Testis (tissue), 5 donors: ENCODE measurements at regions of chr17 and their contacts with region 1.

Region 1: DNA sequence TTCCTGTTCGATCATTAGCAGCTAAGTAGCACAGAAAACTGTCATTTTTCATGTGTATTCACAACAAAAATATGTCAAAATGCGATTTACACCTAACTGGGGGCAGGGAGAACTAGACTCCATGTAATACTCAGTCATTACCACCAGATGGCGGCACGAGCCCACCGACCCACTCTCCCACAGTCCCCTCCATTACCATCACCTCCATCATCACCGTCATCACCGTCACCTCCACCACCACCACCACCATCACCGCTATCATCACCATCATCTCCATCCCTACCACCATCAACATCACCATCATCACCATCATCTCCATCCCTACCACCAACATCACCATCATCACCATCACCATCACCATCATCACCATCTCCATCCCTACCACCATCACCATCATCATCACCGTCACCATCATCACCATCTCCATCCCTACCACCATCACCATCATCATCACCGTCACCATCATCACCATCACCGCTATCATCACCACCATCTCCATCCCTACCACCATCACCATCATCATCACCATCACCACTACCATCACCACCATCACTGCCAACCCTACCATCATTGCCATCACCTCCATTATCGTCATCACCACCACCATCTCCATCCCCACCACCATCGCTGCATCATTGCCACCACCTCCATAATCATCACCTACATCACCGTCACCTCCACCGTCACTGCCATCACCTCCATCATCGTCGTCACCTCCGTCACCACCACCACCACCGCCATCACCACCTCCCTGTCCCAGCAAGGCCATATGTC is 14.4 kb downstream of the NDUFAF8 start:
- DNase-seq: peak; percentile 47
- H3K4me3 ChIP-seq: no peak overlapping the region
- H3K27ac ChIP-seq: no peak overlapping the region
- H3K4me1 ChIP-seq: peaks cover 12% of the 10 kb centered on the region
- H3K27me3 ChIP-seq: no peaks in the 10 kb centered on the region
- CTCF ChIP-seq: peak; percentile 82 to 88 (median 86)
- POLR2A ChIP-seq: no peak

Region 2: DNA sequence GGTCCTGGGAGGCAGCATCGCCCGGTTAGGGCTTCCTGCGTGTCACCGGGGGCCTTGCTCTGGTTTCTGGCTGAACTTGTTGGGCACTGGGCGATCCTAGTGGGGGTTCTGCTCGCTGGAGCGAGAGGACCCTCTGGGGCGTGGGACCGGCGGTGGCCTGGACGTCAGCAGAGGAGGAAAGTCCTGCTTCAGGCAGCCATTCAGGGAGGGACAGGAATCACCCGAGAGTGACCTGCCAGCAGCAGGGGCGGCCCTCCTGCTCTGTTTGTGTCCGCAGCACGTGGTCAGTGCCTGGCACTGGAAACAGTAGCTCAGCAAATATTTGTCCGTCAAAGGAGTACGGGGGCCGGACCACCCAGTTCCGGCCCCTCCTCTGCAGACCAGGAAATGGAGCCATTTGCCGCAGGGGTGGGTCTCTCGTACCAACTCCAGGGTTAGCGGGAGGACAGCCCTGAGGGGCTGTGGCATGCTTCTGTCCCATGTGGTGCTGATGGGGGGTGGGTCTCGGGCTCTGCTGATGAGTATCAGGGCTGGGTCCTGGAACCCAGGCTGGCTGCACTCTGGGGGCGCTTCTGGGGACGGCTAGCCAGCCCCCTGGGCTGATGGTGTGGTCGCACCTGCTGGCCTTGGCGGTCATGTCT is 170.3 kb before region 1 on chr17:
- intact Hi-C with region 1: no loop called
- DNase-seq: no peak
- H3K4me3 ChIP-seq: no peak overlapping the region
- H3K27ac ChIP-seq: no peak overlapping the region
- H3K4me1 ChIP-seq: no peaks in the 10 kb centered on the region
- H3K27me3 ChIP-seq: no peaks in the 10 kb centered on the region
- CTCF ChIP-seq: no peak
- POLR2A ChIP-seq: no peak

Region 3: DNA sequence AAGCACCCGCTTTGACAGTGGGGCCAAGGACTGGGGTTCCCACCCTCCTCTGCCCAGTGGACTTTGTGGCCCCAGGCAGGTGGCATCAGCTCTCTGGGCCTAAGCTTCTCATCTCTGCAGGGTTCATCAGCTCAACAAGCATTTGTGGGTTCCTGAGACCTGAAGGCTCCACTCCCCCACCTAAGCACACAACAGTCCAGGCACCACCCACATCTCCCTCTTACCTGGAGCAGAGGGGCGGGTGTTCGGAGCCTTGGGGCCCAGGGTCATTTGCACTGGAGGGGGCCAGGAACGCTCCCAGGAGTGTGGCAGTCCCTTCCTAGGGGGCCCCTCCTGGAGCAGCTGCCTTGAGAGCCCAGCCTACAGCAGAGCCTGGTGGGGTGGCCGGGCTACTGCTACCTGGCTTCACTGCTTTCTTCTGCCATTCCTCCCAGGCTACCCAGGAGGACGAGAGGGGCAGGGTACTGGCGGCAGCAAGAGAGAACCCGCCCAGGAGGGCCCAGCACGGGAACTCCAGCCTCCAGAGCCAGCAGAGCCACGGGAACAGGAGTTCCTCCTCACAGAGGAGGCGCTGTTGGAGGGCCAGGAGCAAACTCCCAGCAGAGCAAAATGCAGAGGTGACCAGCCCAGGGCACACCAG is 76.5 kb after region 1 on chr17:
- intact Hi-C with region 1: loop called (anchors 10 kb)
- DNase-seq: no peak
- H3K4me3 ChIP-seq: no peak overlapping the region
- H3K27ac ChIP-seq: no peak overlapping the region
- H3K4me1 ChIP-seq: peaks cover 14% of the 10 kb centered on the region
- H3K27me3 ChIP-seq: no peaks in the 10 kb centered on the region
- CTCF ChIP-seq: no peak
- POLR2A ChIP-seq: no peak

Region 4: GRCh38 chr17:81484195-81484979 is 230.8 kb after region 1 on chr17:
- intact Hi-C with region 1: loop called (anchors 5 kb)
- DNase-seq: peak; percentile 92
- H3K4me3 ChIP-seq: peak overlapping the region; percentile 31 to 46
- H3K27ac ChIP-seq: no peak overlapping the region
- H3K4me1 ChIP-seq: peaks cover 30% of the 10 kb centered on the region
- H3K27me3 ChIP-seq: no peaks in the 10 kb centered on the region
- CTCF ChIP-seq: peak; percentile 97 to 99 (median 98)
- POLR2A ChIP-seq: no peak